Activated CD4-positive, alpha-beta T cell treated with anti-CD3 and anti-CD28 coated beads, Interleukin-2, amount 10 ng/mL, durations not matched to agents 7 days and 5 days (primary cell): ENCODE measurements at regions of chr16 and their contacts with region 1.

Region 1: GRCh38 chr16:17590719-17591654 is 120.2 kb upstream of the XYLT1 start:
- DNase-seq: peak; percentile 44
- H3K4me3 Mint-ChIP-seq: peak overlapping the region; percentile 11
- H3K27ac Mint-ChIP-seq: peak overlapping the region; percentile 81
- H3K4me1 Mint-ChIP-seq: peaks cover 7% of the 10 kb centered on the region
- H3K27me3 Mint-ChIP-seq: peaks cover 4% of the 10 kb centered on the region

Region 2: GRCh38 chr16:17578921-17579874 is 11.8 kb before region 1 on chr16:
- CTCF ChIA-PET with region 1: interaction called, 14 read pairs
- POLR2A ChIA-PET with region 1: no interaction called
- DNase-seq: peak; percentile 73
- H3K4me3 Mint-ChIP-seq: no peak overlapping the region
- H3K27ac Mint-ChIP-seq: no peak overlapping the region
- H3K4me1 Mint-ChIP-seq: peaks cover 3% of the 10 kb centered on the region
- H3K27me3 Mint-ChIP-seq: peaks cover 15% of the 10 kb centered on the region